Activated T-helper 1 cell treated with anti-CD3 and anti-CD28 coated beads, Interleukin-12 subunit alpha, Interleukin-12 subunit beta, Interleukin-2, Interleukin-4 antibody, amounts not matched to agents 30 ng/mL and 10 ng/mL and 1 ng/mL, durations not matched to agents 14 hours and 24 hours and 36 hours (primary cell): ENCODE measurements at regions of chr17 and their contacts with region 1.

Region 1: DNA sequence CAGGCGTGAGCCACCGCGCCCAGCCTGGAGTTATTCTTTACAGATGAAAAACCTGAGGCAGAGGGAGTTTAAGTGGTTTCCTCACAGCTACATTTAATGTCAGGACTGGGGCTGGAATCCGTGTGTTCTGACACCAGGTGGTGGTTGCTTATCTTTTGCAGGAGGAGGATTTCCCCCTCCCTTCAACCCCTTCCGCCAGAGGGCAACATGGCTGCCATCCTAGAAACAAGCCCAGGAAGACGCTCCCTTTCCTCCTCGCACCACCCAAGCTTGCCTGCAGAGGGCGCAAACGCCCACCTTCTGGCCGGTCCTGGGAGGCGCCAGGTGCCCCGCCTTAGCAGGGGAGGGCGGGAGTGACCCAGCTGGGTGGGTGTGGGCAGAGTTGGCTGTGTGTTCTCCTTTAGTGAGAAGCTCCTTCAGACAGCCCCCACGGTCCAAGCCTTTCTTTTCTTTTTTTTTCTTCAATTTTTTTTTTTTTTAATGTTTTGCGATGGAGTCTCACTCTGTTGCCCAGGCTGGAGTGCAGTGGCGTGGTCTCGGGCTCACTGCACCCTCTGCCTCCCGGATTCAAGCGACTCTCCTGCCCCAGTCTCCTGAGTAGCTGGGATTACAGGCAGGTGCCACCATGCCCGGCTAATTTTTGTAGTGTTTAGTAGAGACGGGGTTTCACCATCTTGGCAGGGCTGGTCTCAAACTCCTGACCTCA is 9.9 kb upstream of the RAP1GAP2 start:
- DNase-seq: peak; percentile 88
- H3K4me3 Mint-ChIP-seq: no peak overlapping the region
- H3K27ac Mint-ChIP-seq: no peak overlapping the region
- H3K4me1 Mint-ChIP-seq: peaks cover 9% of the 10 kb centered on the region
- H3K27me3 Mint-ChIP-seq: peaks cover 28% of the 10 kb centered on the region

Region 2: GRCh38 chr17:2749784-2750181 is 36.5 kb before region 1 on chr17:
- intact Hi-C with region 1: loop called (anchors 1 kb)
- DNase-seq: peak; percentile 70
- H3K4me3 Mint-ChIP-seq: no peak overlapping the region
- H3K27ac Mint-ChIP-seq: no peak overlapping the region
- H3K4me1 Mint-ChIP-seq: no peaks in the 10 kb centered on the region
- H3K27me3 Mint-ChIP-seq: peaks cover 62% of the 10 kb centered on the region

Region 3: GRCh38 chr17:2796164-2797125 is 10.1 kb after region 1 on chr17 and contains the start of gene RAP1GAP2:
- intact Hi-C with region 1: loop called (anchors 1 kb)
- DNase-seq: peak; percentile 74
- H3K4me3 Mint-ChIP-seq: peak within 1 kb of the TSS; percentile 68
- H3K27ac Mint-ChIP-seq: peak within 1 kb of the TSS; percentile 18
- H3K4me1 Mint-ChIP-seq: peaks cover 72% of the 10 kb centered on the region
- H3K27me3 Mint-ChIP-seq: peaks cover 7% of the 10 kb centered on the region
- total RNA-seq, gene RAP1GAP2: 0.20 and 0.34 TPM in 2 replicates

Region 4: DNA sequence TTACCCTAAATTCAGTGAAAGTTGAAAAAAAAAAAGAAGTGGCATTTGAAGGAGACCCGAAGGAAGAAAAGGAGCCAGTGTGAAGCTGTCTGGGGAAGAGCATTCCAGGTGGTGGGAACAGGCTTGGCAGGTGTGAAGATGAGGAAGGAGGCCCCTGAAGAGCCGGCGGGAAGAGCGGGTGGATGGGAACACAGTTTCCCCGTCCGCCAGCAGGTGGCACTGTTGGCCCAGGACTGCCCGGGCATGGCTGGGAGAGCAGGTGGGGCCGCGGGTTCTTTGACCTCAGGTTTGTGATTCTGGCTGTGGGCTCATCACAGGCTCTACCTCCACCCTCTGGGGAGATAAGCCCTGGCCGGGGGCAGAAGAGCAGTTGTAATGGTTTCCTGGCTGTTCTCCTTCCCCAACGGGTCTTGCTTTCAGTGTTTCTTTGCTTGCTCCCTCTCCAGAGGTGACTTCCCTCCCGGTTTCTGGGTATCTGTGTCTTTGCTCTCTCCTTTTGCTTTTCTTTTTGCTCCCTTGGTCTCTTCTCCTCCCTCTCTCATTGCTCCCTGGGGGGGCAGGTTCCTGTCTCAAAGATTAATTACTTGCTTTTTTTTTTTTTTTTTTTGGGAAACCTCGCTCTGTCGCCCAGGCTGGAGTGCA is 42.2 kb after region 1 on chr17:
- intact Hi-C with region 1: loop called (anchors 1 kb)
- DNase-seq: peak; percentile 57
- H3K4me3 Mint-ChIP-seq: no peak overlapping the region
- H3K27ac Mint-ChIP-seq: no peak overlapping the region
- H3K4me1 Mint-ChIP-seq: peaks cover 18% of the 10 kb centered on the region
- H3K27me3 Mint-ChIP-seq: peaks cover 26% of the 10 kb centered on the region

Region 5: DNA sequence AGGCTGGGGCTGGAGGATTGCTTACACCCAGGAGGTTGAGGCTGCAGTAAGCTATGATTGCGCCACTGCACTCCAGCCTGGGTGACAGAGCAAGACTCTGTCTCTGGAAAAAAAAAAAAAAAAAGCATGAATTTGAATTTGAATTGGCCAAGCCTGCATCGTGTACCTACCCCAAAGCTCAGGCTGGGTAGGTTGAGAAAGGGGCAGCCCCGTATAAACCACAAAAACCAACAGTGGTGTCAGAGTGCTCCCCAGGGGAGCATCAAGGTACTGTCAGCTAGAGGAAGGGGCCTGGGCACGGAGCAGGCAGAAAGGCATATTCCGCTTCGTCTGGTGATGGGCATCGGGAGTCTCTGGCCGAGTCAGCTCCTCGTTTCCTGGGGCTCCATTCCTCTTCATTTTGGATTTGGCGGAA is 50.8 kb after region 1 on chr17:
- intact Hi-C with region 1: loop called (anchors 1 kb)
- DNase-seq: no peak
- H3K4me3 Mint-ChIP-seq: no peak overlapping the region
- H3K27ac Mint-ChIP-seq: no peak overlapping the region
- H3K4me1 Mint-ChIP-seq: peaks cover 5% of the 10 kb centered on the region
- H3K27me3 Mint-ChIP-seq: peaks cover 8% of the 10 kb centered on the region

Region 6: GRCh38 chr17:2929881-2930533 is 143.7 kb after region 1 on chr17:
- intact Hi-C with region 1: loop called (anchors 1 kb)
- DNase-seq: no peak
- H3K4me3 Mint-ChIP-seq: no peak overlapping the region
- H3K27ac Mint-ChIP-seq: no peak overlapping the region
- H3K4me1 Mint-ChIP-seq: peaks cover 10% of the 10 kb centered on the region
- H3K27me3 Mint-ChIP-seq: no peaks in the 10 kb centered on the region

Region 7: DNA sequence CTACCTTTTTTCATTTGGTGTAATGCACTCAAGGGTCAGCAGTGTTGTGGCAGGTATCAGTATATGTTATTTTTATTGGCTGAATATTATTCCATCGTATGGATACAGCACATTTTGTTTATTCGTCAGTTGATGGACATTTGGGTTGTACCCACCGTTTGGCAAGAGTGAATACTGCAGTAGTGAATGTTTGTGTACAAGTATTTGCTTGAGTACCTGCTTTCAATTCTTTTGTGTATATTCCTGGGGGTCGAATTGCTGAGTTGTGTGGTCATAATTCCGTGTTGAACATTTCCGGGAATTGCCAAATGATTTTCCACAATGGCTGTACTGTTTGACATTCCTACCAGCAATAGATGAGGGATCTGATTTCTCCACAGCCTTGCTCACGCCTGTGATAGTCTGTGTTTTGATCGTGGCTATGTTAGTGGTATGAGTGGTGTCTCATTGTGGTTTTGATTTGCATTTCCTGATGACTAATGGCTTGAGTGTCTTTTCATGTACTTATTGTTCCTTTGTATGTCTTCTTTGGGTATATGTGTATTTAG is 168.6 kb after region 1 on chr17:
- intact Hi-C with region 1: no loop called
- DNase-seq: no peak
- H3K4me3 Mint-ChIP-seq: no peak overlapping the region
- H3K27ac Mint-ChIP-seq: no peak overlapping the region
- H3K4me1 Mint-ChIP-seq: peaks cover 9% of the 10 kb centered on the region
- H3K27me3 Mint-ChIP-seq: peaks cover 9% of the 10 kb centered on the region

Region 8: DNA sequence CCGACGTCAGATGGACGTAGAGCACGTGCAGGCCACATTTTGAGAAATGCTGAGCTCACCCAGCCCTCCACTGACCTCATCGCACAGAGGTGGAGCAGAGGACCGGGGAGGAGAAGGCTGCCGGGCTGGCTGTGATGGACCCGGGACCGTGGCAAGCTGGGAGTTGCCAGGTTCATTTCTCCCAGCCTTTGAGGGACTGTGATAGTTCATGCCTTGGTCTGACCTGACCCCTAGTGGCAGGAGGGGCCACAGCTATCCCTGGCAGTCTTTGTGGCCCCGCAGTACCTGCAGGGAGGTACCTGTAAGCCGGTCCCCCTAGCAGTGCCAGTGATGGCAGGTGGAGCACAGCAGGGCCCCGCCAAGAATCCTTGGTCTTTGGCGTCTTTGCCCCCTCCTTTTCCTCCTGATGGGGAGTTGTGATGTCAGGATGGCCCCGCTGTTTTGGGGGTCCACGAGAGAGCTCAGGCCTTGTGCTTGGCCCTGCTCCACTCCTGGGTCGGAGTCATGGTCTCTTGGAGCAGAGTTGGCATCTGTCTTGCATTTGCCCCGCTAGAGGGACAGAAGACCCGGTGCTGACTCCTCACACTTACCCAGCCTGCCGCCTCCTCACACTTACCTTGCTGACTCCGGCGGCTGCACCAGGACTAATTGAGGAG is 226.7 kb after region 1 on chr17:
- intact Hi-C with region 1: loop called (anchors 1 kb)
- DNase-seq: peak; percentile 19
- H3K4me3 Mint-ChIP-seq: no peak overlapping the region
- H3K27ac Mint-ChIP-seq: no peak overlapping the region
- H3K4me1 Mint-ChIP-seq: no peaks in the 10 kb centered on the region
- H3K27me3 Mint-ChIP-seq: no peaks in the 10 kb centered on the region

Region 9: DNA sequence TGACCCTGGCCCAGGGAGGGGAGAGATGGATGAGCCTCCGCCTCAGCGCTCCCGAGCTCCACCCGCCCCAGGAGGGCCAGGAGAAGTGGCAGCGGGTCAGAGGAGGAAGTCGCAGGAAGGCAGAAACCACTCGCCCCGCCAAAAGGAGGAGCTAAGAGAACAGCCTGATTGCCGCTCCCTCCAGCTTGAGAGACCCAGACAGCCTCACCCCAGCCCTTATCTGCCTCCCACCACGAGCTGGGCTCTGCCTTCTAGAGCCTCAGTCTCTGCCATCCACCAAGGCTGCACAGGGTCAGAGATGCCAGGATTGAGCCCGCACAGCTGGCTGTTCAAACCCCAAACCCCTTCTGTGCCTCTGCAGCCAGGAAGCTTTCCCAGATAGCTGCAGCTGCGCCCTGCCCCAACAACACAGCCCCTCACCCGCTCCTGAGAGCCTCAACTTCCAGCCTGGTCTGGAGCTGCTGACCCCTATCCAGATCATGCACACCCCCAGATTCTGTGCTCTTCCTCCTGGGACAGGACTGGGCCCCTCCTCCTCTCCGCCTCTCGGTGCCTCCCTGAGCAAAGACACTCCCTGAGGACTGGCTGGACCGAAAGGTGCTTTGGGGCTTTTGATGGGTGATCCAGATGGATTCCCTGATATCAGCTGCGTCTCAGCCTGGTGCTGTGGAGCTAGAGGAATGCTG is 1178.9 kb after region 1 on chr17:
- intact Hi-C with region 1: no loop called
- DNase-seq: peak; percentile 66
- H3K4me3 Mint-ChIP-seq: peak overlapping the region; percentile 88
- H3K27ac Mint-ChIP-seq: peak overlapping the region; percentile 90
- H3K4me1 Mint-ChIP-seq: peaks cover 38% of the 10 kb centered on the region
- H3K27me3 Mint-ChIP-seq: no peaks in the 10 kb centered on the region